ENCODE measurements at regions of chr1 and their contacts with region 1.

Region 1: DNA sequence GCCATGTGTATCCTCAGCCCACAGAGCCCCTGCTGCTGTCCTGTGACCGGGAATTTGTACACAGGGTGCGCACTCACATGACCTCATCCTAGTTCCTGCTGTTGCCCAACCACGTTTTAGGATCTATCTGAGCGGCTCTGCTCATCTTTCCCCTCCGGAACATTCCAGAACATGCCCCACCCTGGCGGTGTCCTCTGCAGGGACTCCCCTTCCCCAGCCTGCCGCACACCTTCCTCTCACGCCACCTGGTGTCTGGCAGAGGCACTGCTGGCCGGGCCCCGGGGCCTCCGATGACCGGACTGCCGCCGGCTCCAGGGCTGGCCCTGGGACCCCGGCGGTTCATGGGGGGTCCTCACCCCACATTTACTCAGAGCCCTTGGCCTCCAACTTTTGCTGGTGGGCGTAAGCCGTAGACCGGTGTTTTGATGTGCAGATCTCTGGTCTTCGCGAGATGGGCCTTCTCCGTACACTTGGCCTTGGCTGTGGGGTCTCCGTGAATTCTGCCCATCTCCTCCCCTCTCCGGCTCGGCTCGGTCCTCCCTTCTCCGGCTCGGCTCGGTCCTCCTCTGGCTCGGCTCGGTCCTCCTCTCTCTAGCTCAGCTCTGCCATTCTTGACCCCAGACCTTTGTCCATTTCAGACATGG is 29.5 kb downstream of the ARHGEF16 start:
- DNase-seq: peak; percentile 16
- H3K4me3 Mint-ChIP-seq: no peak overlapping the region
- H3K27ac Mint-ChIP-seq: no peak overlapping the region
- H3K4me1 Mint-ChIP-seq: no peaks in the 10 kb centered on the region
- H3K27me3 Mint-ChIP-seq: no peaks in the 10 kb centered on the region

Region 2: DNA sequence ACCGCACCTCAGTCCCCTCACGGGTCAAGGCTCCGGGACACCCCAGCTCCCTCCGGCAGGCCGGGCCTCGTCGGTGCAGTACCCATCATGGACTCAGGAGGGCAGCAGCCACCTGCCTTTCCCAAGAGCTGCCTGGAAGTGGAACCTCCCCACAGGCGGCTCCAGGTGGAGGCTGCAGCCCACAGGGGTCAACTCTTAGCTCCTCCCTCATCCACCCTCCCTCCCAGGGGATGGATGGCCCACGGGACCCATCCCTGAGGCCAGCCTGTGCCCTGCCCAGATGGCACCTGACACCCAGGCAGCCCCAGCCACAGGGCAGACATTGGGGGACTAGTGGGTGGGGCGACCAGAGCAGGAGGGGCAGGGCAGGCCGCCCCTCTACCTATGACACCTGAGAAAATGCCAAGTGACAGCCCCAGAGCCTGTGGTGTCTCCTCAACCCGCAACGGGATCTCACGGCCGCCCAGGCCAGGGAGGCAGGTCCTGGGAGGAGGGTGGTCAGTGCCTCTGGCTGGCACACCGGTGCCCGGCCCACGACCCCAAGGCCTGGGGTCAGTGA is 30.6 kb before region 1 on chr1:
- intact Hi-C with region 1: loop called (anchors 1 kb)
- DNase-seq: peak; percentile 56
- H3K4me3 Mint-ChIP-seq: no peak overlapping the region
- H3K27ac Mint-ChIP-seq: no peak overlapping the region
- H3K4me1 Mint-ChIP-seq: no peaks in the 10 kb centered on the region
- H3K27me3 Mint-ChIP-seq: peaks cover 12% of the 10 kb centered on the region